Activated T-helper 1 cell treated with anti-CD3 and anti-CD28 coated beads, Interleukin-12 subunit alpha, Interleukin-12 subunit beta, Interleukin-2, Interleukin-4 antibody, amounts not matched to agents 30 ng/mL and 10 ng/mL and 1 ng/mL, durations not matched to agents 14 hours and 24 hours and 36 hours (primary cell): ENCODE measurements at regions of chr19 and their contacts with region 1.

Region 1: GRCh38 chr19:20776083-20777076 is at the start of gene ZNF66:
- DNase-seq: peak; percentile 91
- H3K4me3 Mint-ChIP-seq: peak within 1 kb of the TSS; percentile 99
- H3K27ac Mint-ChIP-seq: peak within 1 kb of the TSS; percentile 96
- H3K4me1 Mint-ChIP-seq: no peaks in the 10 kb centered on the region
- H3K27me3 Mint-ChIP-seq: no peaks in the 10 kb centered on the region
- total RNA-seq, gene ZNF66: 8.4 and 9.2 TPM in 2 replicates

Region 2: GRCh38 chr19:20565321-20566018 is 210.9 kb before region 1 on chr19 and contains the start of gene ZNF737:
- intact Hi-C with region 1: loop called (anchors 2 kb)
- DNase-seq: peak; percentile 81
- H3K4me3 Mint-ChIP-seq: peak within 1 kb of the TSS; percentile 97
- H3K27ac Mint-ChIP-seq: peak within 1 kb of the TSS; percentile 94
- H3K4me1 Mint-ChIP-seq: peaks cover 13% of the 10 kb centered on the region
- H3K27me3 Mint-ChIP-seq: no peaks in the 10 kb centered on the region
- total RNA-seq, gene ZNF737: 4.6 and 5.5 TPM in 2 replicates

Region 3: DNA sequence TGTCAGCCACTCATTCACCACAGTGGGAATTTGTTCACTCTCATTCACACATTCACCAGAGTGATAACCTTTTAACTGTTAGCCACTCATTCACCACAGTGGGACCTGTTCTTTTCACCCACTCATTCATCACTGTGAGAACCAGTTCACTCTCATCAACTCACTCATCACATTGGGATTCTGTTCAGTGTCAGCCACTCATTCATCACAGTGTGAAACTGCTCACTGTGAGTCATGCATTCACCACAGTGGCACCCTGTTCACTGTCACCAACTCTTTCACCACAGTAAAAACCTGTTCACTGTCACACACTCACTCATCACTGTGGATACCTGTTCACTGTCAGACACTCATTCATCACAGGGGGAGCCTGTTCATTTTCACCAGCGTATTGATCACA is 103.1 kb after region 1 on chr19:
- intact Hi-C with region 1: no loop called
- DNase-seq: no peak
- H3K4me3 Mint-ChIP-seq: no peak overlapping the region
- H3K27ac Mint-ChIP-seq: no peak overlapping the region
- H3K4me1 Mint-ChIP-seq: no peaks in the 10 kb centered on the region
- H3K27me3 Mint-ChIP-seq: no peaks in the 10 kb centered on the region

Region 4: GRCh38 chr19:20999731-21000352 is 223.5 kb after region 1 on chr19:
- intact Hi-C with region 1: loop called (anchors 1 kb)
- DNase-seq: peak; percentile 80
- H3K4me3 Mint-ChIP-seq: peak overlapping the region; percentile 89
- H3K27ac Mint-ChIP-seq: peak overlapping the region; percentile 76
- H3K4me1 Mint-ChIP-seq: peaks cover 8% of the 10 kb centered on the region
- H3K27me3 Mint-ChIP-seq: no peaks in the 10 kb centered on the region

Region 5: DNA sequence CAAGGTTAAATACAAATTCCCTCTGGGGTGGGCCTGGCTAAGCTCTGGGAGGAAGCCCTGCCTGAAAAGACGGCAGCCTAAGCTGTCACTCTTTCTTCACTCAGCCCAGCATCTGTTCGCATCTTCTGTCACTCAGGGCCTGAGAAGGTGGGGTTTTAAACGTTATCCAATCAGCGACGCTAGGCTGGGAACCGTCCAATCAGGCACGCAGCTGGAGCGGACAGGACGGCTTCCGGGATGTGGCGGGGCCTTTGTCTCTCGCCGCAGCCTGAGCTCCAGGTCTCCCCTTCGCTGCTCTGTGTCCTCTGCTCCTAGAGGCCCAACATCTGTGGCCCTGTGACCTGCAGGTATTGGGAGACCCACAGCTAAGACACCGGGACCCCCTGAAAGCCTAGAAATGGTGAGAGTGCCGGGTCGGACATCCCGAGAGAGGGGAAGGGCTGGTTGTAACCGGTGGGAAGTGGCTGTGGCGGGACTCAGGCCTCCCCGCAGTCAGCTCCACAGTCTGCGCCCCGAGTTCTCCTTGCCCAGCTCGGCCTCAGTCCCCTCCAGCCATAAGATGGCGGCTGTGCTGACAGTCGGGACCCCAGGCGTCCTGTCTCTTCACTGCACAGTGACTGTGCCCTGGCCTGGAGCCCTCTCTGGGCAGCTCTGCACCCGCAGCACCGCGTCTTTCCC is 365.5 kb after region 1 on chr19 and contains the start of gene ZNF431:
- intact Hi-C with region 1: loop called (anchors 5 kb)
- DNase-seq: peak; percentile 85
- H3K4me3 Mint-ChIP-seq: peak within 1 kb of the TSS; percentile 96
- H3K27ac Mint-ChIP-seq: peak within 1 kb of the TSS; percentile 91
- H3K4me1 Mint-ChIP-seq: peaks cover 25% of the 10 kb centered on the region
- H3K27me3 Mint-ChIP-seq: no peaks in the 10 kb centered on the region
- total RNA-seq, gene ZNF431: 16.0 and 16.8 TPM in 2 replicates

Region 6: DNA sequence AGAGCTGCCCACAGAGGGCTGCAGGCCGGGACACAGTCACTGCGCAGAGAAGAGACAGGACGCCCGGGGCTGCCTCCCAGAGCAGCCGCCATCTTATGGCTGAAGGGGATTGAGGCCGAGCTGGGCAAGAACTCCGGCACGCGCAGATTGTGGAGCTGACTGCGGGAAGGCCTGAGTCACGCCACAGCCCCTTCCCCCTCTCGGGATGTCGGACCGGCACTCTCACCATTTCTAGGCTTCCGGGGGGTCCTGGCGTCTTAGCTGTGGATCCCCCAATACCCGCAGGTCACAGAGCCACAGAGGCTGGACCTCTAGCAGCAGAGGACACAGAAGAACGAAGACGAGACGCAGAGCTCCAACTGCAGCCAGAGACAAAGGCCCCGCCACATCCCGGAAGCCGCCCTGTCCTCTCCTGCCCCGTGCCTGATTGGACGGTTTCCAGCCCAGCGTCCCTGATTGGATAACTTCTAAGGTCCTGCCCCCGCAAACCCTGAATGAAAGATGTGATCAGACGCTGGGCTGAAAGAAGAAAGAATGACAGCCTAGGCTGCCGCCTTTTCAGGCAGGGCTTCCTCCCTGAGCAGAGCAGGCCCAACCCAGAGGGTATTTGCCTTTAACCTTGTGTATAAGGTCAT is 1059.5 kb after region 1 on chr19 and contains the start of gene ZNF43:
- intact Hi-C with region 1: loop called (anchors 2 kb)
- DNase-seq: peak; percentile 87
- H3K4me3 Mint-ChIP-seq: peak within 1 kb of the TSS; percentile 98
- H3K27ac Mint-ChIP-seq: peak within 1 kb of the TSS; percentile 98
- H3K4me1 Mint-ChIP-seq: peaks cover 2% of the 10 kb centered on the region
- H3K27me3 Mint-ChIP-seq: peaks cover 2% of the 10 kb centered on the region
- total RNA-seq, gene ZNF43: 29.9 and 30.5 TPM in 2 replicates